A673 (cell line): ENCODE measurements at regions of chr18 and their contacts with region 1.

Region 1: DNA sequence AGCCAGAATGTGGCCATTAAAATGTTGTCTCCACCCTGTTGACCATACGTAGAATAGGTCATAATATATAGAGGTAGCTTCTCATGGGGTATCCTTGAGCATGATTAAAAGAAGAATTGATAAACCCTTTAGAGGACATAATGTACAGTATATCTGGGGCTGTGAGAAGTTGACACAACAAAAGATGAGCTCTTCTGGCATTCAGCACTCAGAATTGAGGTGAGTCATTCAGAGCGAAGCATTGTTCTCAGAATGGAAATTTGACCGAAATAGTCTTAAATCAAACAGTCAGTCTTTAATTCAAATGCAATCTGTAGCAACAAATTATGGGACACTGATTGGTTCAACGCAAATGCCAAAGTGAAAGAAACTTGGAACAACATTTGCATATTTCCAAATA is 47.3 kb downstream of the CTAGE1 start:
- DNase-seq: no peak
- H3K4me3 ChIP-seq: no peak overlapping the region
- H3K27ac ChIP-seq: no peak overlapping the region
- H3K4me1 ChIP-seq: no peaks in the 10 kb centered on the region
- H3K27me3 ChIP-seq: peaks cover 53% of the 10 kb centered on the region
- CTCF ChIP-seq: no peak

Region 2: DNA sequence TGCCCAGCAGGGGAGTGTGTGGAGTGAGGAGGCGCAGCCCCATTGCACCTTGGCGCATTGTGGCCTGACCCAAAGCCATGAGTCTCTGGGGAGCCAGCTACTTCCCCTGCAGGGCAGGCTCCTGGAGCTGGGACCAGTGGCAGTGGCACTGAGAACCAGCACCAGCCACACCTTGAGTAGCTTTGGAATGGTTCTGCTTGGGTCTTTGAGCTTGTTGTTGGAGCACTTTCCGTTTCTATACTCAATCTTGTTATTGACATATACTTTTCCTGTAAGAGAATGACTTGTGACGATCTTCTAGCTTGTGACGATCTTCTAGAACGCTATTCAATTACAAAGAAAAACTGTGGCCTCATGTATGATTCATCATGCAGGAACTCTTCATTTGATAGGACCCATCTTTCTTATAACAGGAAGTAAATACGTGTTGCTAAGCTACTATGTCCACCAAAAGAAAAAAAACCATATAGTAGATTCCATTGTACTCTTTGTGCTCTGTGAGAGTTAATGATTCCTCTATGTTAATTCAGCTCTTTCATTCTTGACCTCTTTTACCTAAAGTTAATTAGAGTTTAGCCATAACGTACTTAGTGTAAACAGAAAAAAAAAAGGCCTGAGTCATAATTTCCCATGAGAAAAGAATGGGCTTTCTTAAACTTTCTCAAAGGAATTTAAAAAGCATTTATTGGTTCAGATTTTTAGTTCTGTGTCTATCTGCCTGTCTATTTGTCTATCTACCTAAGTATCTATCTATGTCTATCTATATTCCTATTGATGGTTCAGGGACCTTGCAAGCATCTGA is 87.9 kb before region 1 on chr18:
- CTCF ChIA-PET with region 1: no interaction called
- POLR2A ChIA-PET with region 1: no interaction called
- intact Hi-C with region 1: no loop called
- DNase-seq: peak; percentile 55
- H3K4me3 ChIP-seq: no peak overlapping the region
- H3K27ac ChIP-seq: no peak overlapping the region
- H3K4me1 ChIP-seq: no peaks in the 10 kb centered on the region
- H3K27me3 ChIP-seq: peaks cover 4% of the 10 kb centered on the region
- CTCF ChIP-seq: no peak

Region 3: GRCh38 chr18:22422909-22423548 is 52.6 kb after region 1 on chr18:
- CTCF ChIA-PET with region 1: no interaction called
- POLR2A ChIA-PET with region 1: no interaction called
- intact Hi-C with region 1: loop called (anchors 5 kb)
- DNase-seq: no peak
- H3K4me3 ChIP-seq: no peak overlapping the region
- H3K27ac ChIP-seq: no peak overlapping the region
- H3K4me1 ChIP-seq: no peaks in the 10 kb centered on the region
- H3K27me3 ChIP-seq: peaks cover 20% of the 10 kb centered on the region
- CTCF ChIP-seq: no peak

Region 4: GRCh38 chr18:22451796-22452195 is 81.4 kb after region 1 on chr18:
- CTCF ChIA-PET with region 1: no interaction called
- POLR2A ChIA-PET with region 1: no interaction called
- intact Hi-C with region 1: no loop called
- DNase-seq: no peak
- H3K4me3 ChIP-seq: no peak overlapping the region
- H3K27ac ChIP-seq: no peak overlapping the region
- H3K4me1 ChIP-seq: no peaks in the 10 kb centered on the region
- H3K27me3 ChIP-seq: peaks cover 22% of the 10 kb centered on the region
- CTCF ChIP-seq: no peak

Region 5: GRCh38 chr18:22694954-22695353 is 324.5 kb after region 1 on chr18:
- CTCF ChIA-PET with region 1: no interaction called
- POLR2A ChIA-PET with region 1: no interaction called
- intact Hi-C with region 1: no loop called
- DNase-seq: peak; percentile 35
- H3K4me3 ChIP-seq: no peak overlapping the region
- H3K27ac ChIP-seq: no peak overlapping the region
- H3K4me1 ChIP-seq: no peaks in the 10 kb centered on the region
- H3K27me3 ChIP-seq: no peaks in the 10 kb centered on the region
- CTCF ChIP-seq: no peak